ENCODE measurements at regions of chr14 and their contacts with region 1.

Region 1: DNA sequence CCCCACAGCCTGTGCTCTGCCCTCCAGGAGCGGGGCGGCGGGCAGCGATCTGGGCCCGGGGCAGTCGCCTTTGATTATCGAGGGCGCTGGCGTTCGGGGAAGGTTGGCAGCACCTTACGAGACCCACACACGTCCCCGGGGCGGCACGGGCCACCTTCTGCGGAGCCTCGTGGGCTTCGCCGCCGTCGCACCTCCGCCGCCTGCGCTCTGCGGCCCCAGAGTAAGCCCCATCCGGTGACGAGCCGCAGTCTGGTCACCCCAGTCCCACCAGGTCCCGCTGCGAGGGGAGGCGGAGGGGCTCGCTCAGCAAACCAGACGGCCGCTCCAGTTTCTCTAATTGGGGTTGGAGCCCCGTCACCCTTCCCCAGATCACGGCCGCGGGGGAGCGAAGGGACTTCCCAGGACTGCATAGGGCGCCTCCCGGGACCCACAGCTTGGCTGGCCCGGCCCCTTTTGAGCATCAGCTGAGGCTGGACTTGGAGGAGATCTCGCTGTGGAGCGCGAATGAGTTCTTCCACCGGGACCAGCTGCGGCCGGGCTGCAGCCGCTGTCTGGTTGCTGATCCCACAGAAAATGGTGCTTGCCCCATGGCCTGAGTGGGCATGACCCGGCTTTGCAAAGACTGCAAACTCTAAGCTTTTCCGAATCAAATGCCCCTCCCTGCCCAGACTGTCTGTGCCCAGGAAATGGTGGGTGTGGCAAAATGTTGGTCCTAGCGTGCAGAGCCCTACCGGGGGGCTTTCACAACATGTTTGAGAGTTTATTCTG is 560 bp downstream of the LGALS3 start:
- DNase-seq: peak; percentile 28
- H3K4me3 Mint-ChIP-seq: peak overlapping the region; percentile 75
- H3K27ac Mint-ChIP-seq: peak overlapping the region; percentile 52
- H3K4me1 Mint-ChIP-seq: peaks cover 33% of the 10 kb centered on the region
- H3K27me3 Mint-ChIP-seq: peaks cover 17% of the 10 kb centered on the region

Region 2: DNA sequence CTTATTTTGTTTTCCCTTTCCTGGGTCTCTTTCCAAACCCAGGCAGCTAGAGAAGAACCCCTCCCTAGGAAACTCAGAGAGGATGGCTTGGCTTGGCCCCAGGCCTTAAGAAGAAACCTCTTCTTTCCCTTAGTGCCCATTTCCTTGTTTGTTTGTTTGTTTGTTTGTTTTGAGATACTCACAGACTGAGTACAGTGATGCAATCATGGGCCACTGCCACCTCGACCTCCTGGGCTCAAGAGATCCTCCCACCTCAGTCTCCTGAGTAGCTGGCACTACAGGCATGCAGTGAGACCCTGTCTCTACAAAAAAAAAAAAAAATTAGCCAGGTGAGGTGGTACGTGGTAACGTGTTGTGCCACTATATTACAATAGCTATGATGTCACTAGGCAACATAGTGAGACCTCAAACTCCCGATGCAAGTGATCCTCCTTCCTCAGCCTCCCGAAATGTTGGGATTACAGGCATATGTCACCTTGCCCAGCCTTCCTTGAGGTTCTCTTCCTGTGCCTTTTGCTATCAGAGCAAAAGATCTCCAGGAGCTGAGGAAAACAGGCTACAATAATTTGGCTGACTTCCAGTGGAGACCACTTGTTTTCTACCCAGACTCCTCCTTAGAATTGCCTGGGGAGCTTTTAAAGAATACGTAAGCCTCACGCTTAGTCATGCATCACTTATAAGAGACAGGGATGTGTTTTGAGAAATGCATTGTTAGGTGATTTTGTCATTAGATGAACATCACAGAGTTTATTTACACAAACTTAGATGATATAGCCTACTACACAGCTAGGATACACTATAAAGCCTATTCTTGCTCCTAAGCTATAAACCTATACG is 35.1 kb before region 1 on chr14:
- intact Hi-C with region 1: loop called (anchors 5 kb)
- DNase-seq: no peak
- H3K4me3 Mint-ChIP-seq: no peak overlapping the region
- H3K27ac Mint-ChIP-seq: no peak overlapping the region
- H3K4me1 Mint-ChIP-seq: peaks cover 20% of the 10 kb centered on the region
- H3K27me3 Mint-ChIP-seq: no peaks in the 10 kb centered on the region

Region 3: GRCh38 chr14:55102141-55102621 is 27.4 kb before region 1 on chr14:
- intact Hi-C with region 1: loop called (anchors 2 kb)
- DNase-seq: peak; percentile 32
- H3K4me3 Mint-ChIP-seq: no peak overlapping the region
- H3K27ac Mint-ChIP-seq: peak overlapping the region; percentile 90
- H3K4me1 Mint-ChIP-seq: peaks cover 45% of the 10 kb centered on the region
- H3K27me3 Mint-ChIP-seq: no peaks in the 10 kb centered on the region

Region 4: GRCh38 chr14:55152052-55152753 is 22.6 kb after region 1 on chr14:
- intact Hi-C with region 1: no loop called
- DNase-seq: no peak
- H3K4me3 Mint-ChIP-seq: no peak overlapping the region
- H3K27ac Mint-ChIP-seq: no peak overlapping the region
- H3K4me1 Mint-ChIP-seq: peaks cover 8% of the 10 kb centered on the region
- H3K27me3 Mint-ChIP-seq: no peaks in the 10 kb centered on the region

Region 5: DNA sequence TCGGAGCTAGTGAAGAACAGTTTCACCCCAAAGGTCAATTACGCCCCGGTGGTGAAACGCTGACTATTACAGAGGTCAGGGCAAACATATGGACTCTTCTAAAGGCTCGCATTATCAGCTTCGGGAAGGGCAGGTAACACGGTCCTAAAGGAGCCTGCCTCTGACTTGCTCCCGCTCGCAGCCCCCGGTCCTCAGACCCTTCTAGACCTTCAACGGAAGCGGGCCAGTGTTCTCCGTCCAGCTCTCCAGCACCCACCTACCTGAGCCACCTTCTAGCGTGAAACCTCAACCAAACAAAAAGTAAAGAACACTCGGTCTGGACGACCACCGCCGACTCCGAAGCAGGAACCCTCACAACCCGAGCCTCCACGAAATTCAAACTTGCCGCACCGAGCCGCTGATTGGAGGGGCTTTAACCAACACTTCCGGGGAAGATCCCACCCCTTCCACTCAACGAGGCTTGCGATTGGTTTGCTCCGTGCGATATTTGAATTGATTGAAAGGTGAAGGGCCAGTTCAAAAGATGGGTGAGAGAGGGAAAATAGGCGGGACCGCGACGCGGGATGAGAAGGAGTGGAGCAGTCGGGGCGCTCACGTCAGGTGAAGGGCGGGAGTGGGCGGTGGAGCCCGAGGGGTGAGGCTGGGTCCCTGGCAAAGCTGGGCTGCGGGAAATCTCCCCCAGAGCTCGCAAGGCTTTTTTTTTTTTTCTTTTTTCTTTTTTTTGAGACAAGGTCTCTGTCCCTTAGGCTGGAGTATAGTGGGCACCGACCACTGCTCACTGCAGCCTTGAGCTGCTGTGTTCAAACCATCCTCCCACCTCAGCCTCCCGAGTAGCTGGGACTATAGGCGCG is 61.8 kb after region 1 on chr14 and contains the start of gene DLGAP5:
- intact Hi-C with region 1: loop called (anchors 2 kb)
- DNase-seq: peak; percentile 93
- H3K4me3 Mint-ChIP-seq: peak within 1 kb of the TSS; percentile 95
- H3K27ac Mint-ChIP-seq: peak within 1 kb of the TSS; percentile 88
- H3K4me1 Mint-ChIP-seq: peaks cover 35% of the 10 kb centered on the region
- H3K27me3 Mint-ChIP-seq: peaks cover 4% of the 10 kb centered on the region
- total RNA-seq, gene DLGAP5: 41.9 and 46.0 TPM in 2 replicates

Measured in activated T-helper 2 cell treated with anti-CD3 and anti-CD28 coated beads, Interferon-gamma antibody, Interleukin-2, Interleukin-4, amounts not matched to agents 10 μg/mL and 5 μg/mL and 100 μg/mL, durations not matched to agents 14 hours and 24 hours and 36 hours (primary cell).